Sigmoid colon (tissue), 7 donors: ENCODE measurements at regions of chr2 and their contacts with region 1.

Region 1: GRCh38 chr2:42568401-42569115 is at the start of gene MTA3:
- DNase-seq: peak; percentile 75
- H3K4me3 ChIP-seq: peak within 1 kb of the TSS; percentile 78 to 99 (median 90)
- H3K27ac ChIP-seq: peak within 1 kb of the TSS; percentile 89 to 97 (median 94)
- H3K4me1 ChIP-seq: peaks cover 0 to 34% (median 22%) of the 10 kb centered on the region in 4 donors
- H3K27me3 ChIP-seq: no peaks in the 10 kb centered on the region
- CTCF ChIP-seq: no peak
- EP300 ChIP-seq: no peak
- POLR2A ChIP-seq: no peak
- total RNA-seq, gene MTA3: 33.9 to 53.2 (median 38.9) TPM

Region 2: GRCh38 chr2:42360890-42361727 is 207.4 kb before region 1 on chr2 and contains the start of gene COX7A2L:
- intact Hi-C with region 1: loop called (anchors 10 kb)
- DNase-seq: peak; percentile 98
- H3K4me3 ChIP-seq: peak within 1 kb of the TSS; percentile 75 to 97 (median 94)
- H3K27ac ChIP-seq: peak within 1 kb of the TSS; percentile 88 to 94 (median 92)
- H3K4me1 ChIP-seq: peaks cover 0 to 32% (median 17%) of the 10 kb centered on the region in 4 donors
- H3K27me3 ChIP-seq: no peaks in the 10 kb centered on the region
- CTCF ChIP-seq: peak in 1 of 4 experiments; percentile 9
- EP300 ChIP-seq: peak in 1 of 4 donors; percentile 37
- POLR2A ChIP-seq: peak; percentile 73 to 76
- total RNA-seq, gene COX7A2L: 149 to 209 (median 172) TPM

Region 3: DNA sequence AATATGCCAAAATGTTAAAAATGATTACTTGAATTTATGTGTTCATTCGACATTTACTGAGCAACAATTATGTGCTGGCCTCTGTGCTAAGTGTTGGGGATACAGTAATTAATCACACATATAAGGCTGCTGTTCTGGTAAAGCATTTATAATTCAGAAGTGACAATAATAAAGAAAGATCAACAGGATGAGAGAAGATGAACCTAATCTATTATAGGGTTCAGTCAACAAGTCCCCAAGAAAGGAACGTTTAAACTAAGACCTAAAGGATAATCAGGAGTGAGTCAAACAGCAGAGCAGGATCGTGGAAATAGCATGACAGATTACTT is 147.4 kb before region 1 on chr2:
- intact Hi-C with region 1: no loop called
- DNase-seq: no peak
- H3K4me3 ChIP-seq: no peak overlapping the region
- H3K27ac ChIP-seq: no peak overlapping the region
- H3K4me1 ChIP-seq: peaks cover 0 to 7% (median 0%) of the 10 kb centered on the region in 4 donors
- H3K27me3 ChIP-seq: peaks cover 0 to 5% (median 0%) of the 10 kb centered on the region in 3 donors
- CTCF ChIP-seq: no peak
- EP300 ChIP-seq: no peak
- POLR2A ChIP-seq: no peak

Region 4: GRCh38 chr2:42494355-42495233 is 74.0 kb before region 1 on chr2:
- intact Hi-C with region 1: loop called (anchors 5 kb)
- DNase-seq: peak; percentile 80
- H3K4me3 ChIP-seq: peak overlapping the region; percentile 26 to 59 (median 54)
- H3K27ac ChIP-seq: peak overlapping the region in 2 of 4 donors; percentile 10 to 51
- H3K4me1 ChIP-seq: peaks cover 0 to 25% (median 22%) of the 10 kb centered on the region in 4 donors
- H3K27me3 ChIP-seq: peaks cover 13 to 53% (median 16%) of the 10 kb centered on the region in 3 donors
- CTCF ChIP-seq: peak; percentile 49 to 85 (median 74)
- EP300 ChIP-seq: no peak
- POLR2A ChIP-seq: no peak

Region 5: DNA sequence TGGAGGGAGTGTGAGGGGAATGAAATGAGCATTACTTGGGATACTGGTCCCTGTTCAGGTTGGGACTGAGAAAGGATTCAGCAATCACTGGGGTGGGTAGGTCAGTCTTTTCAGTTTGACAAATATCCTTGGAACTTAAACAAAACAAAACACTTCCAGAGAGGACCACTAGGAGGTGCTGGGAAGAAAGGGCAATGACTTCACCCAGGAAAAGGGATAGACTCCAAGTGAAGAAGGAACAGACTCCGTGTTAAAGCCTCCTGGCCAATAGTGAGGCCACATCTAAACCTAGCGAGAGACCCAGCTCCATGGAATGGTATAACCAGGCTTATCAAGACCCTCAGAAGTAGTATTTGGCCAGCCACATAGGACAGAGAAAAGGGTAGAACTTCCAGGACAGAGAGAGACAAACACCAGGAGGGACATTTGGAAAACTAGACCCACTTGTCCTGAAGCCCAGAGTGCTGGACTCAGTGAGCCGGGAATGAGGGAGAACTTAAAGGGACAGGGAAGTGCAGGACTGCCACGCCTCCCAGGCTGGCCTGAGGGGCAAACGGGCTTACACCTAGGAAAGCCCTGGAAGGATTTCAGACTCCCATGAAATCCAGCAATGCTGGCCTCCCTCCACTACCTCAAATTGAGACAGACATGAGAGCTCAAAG is 55.2 kb before region 1 on chr2:
- intact Hi-C with region 1: loop called (anchors 5 kb)
- DNase-seq: no peak
- H3K4me3 ChIP-seq: no peak overlapping the region
- H3K27ac ChIP-seq: no peak overlapping the region
- H3K4me1 ChIP-seq: no peaks in the 10 kb centered on the region
- H3K27me3 ChIP-seq: no peaks in the 10 kb centered on the region
- CTCF ChIP-seq: peak; percentile 22 to 69 (median 60)
- EP300 ChIP-seq: no peak
- POLR2A ChIP-seq: no peak

Region 6: DNA sequence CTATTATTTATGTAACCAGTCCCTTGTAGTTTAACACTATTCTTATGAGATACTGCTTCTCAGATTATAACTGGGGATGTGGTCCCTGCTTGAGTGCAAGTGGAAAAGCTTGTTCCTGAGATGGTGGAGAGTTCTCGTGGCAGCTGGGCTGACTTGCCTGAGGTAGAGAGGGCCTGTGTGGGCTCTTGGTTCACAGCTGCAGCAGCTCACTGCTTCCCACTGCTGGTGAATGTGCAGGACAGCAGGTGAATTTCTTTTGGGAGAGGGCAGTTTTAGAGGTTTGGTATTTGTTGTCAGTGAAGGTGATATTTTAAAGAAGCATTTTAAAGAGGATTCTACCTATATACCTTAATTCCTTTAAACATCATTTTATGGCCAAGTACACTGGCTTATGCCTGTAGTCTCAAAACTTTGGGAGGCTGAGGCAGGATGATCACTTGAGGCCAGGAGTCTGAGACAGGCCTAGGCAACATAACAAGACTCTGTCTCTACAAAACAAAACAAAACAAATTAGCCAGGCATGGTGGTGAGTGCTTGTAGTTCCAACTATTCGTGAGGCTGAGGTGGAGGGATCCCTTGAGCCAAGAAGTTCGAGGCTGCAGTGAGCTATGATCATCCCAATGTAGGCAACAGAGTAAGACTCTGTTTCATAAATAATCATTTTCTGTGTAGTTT is 94.7 kb after region 1 on chr2:
- intact Hi-C with region 1: loop called (anchors 5 kb)
- DNase-seq: peak; percentile 80
- H3K4me3 ChIP-seq: no peak overlapping the region
- H3K27ac ChIP-seq: no peak overlapping the region
- H3K4me1 ChIP-seq: peaks cover 0 to 13% (median 5%) of the 10 kb centered on the region in 4 donors
- H3K27me3 ChIP-seq: no peaks in the 10 kb centered on the region
- CTCF ChIP-seq: peak; percentile 79 to 97 (median 96)
- EP300 ChIP-seq: no peak
- POLR2A ChIP-seq: no peak

Region 7: DNA sequence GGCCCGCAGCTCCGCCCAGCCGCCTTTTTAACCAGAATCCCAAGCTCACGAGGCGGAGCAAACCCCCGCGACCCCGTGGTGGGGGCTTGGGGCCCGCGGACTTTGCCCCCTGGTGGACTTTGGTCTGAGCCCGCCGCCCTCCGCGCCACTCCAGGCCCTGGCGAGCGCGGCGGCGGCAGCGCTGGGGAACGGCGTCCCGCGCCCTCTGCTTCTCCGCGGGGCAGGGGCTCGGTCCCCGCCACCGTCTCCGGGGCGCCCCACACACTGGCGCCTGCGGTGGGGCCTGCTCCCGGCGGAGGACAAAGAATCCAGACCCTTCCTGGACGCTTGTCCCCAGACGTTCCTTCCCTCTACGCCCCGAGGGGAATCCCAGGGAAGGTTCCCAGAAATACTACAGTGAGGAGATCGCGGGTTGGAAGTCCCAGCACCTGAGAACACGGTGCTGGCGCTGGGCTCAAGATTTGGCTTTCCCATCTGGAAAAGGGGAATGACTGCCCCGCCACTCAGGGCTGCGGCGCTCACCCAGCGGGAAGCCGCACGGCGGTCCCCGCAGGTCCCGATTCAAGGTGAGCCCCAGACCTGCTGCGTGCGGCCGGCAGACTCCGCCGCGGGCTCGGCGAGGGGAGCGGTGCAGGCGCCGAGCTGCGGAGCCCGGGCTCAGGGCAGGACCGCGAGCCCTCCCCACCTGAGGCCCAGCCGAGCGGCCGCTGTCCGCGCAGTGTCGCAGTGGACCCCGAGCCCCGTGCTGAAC is 224.2 kb after region 1 on chr2 and contains the start of gene HAAO:
- intact Hi-C with region 1: loop called (anchors 10 kb)
- DNase-seq: peak; percentile 59
- H3K4me3 ChIP-seq: peak within 1 kb of the TSS; percentile 45 to 66 (median 58)
- H3K27ac ChIP-seq: peak within 1 kb of the TSS; percentile 71 to 88 (median 80)
- H3K4me1 ChIP-seq: peaks cover 0 to 26% (median 17%) of the 10 kb centered on the region in 4 donors
- H3K27me3 ChIP-seq: no peaks in the 10 kb centered on the region
- CTCF ChIP-seq: no peak
- EP300 ChIP-seq: no peak
- POLR2A ChIP-seq: no peak
- total RNA-seq, gene HAAO: 2.5 to 5.6 (median 3.5) TPM